ENCODE measurements at regions of chr20 and their contacts with region 1.

Region 1: DNA sequence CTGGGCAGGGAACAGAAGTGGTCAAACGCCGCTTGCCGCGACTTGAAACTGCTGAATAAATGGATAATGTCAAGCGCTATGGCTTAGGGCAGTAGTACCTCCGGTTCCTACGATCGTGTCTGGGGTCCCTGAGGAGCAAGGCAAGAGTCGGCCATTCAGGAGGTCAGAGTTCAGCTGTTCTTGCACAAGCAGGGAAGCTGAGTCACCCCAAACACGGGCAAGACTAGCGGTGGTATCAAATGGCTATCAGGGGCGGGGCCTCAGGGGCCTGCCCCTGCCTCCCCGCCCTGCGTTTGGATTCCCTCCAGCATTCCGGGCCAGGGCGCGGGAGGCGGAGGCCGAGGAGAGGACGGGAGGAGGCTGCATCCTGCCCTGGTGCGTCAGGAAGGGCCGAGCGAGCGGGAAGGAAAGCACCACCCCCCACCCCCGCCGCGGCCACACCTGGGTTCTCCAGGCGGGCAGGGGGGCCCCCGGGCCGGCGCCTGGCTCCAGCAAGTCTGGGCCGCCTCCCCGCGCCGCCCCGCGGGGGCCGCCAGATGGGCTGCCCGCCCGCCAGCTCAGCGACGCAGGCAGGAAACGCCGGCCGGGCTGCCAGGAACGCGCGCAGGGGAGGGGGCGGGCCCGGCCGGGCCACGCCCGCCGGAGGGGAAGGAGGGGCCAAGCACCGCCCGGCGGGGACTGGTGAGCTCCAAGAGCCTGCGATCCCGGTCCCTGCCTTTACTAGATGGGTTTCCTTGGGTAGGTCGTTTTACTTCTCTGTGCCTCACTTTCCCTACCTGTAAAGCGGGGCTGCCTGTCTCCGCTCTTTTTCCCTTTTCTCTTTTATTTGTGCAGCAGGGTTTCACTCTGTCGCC is 32.2 kb upstream of the ID1 start:
- DNase-seq: peak; percentile 96 to 98
- ATAC-seq: peak; percentile 92
- H3K4me3 ChIP-seq: peak overlapping the region; percentile 54 to 68 (median 56)
- H3K27ac ChIP-seq: peak overlapping the region; percentile 86 to 93 (median 89)
- H3K4me1 ChIP-seq: peaks cover 13 to 19% of the 10 kb centered on the region in 2 donors
- H3K27me3 ChIP-seq: no peaks in the 10 kb centered on the region
- CTCF ChIP-seq: peak in 3 of 5 experiments; percentile 7 to 25 (median 23)
- POLR2A ChIP-seq: peak; percentile 86 to 89

Region 2: DNA sequence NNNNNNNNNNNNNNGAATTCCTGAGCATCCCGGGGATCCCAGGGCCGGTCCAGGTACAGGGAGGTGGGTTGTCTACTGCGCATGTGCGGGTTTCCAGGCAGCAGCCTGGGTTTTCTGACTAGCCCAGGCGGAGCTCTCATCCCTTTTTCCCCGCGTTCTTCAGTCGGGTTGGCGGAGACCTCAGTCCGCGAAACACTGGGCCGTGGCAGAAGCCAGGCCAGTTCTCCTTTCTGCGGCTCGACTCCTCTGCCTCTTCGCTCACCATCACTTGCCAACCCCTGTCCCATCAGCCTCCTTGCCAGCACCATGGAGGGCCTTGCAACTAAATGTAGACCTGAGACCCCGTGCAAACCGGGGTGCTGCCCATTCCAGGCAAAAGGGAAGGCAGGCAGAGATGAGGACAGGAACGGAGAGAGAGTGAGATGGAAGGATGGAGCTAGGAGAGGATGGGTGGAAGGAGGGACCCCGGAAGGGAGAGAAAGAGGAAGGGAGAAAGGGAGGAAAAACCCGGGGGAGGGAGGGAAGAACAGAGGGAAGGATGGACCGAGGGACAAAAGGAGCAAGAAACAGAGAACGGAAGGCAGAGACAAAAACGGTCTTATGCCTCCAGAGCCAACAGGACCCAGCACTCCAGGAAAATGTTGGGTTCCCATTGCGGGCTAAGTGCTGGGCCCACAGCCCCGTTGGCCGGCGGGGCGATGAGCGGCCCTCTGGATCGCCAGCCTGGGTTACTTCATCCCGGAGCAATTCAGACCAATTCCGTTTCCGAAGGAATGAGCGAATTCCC is 760.9 kb before region 1 on chr20:
- in situ Hi-C with region 1: no loop called
- intact Hi-C with region 1: no loop called
- DNase-seq: peak in 1 of 2 donors; percentile 28
- ATAC-seq: no peak
- H3K4me3 ChIP-seq: no peak overlapping the region
- H3K27ac ChIP-seq: no peak overlapping the region
- H3K4me1 ChIP-seq: no peaks in the 10 kb centered on the region
- H3K27me3 ChIP-seq: peaks cover 0 to 11% (median 0%) of the 10 kb centered on the region in 3 donors
- CTCF ChIP-seq: no peak
- POLR2A ChIP-seq: no peak

Region 3: DNA sequence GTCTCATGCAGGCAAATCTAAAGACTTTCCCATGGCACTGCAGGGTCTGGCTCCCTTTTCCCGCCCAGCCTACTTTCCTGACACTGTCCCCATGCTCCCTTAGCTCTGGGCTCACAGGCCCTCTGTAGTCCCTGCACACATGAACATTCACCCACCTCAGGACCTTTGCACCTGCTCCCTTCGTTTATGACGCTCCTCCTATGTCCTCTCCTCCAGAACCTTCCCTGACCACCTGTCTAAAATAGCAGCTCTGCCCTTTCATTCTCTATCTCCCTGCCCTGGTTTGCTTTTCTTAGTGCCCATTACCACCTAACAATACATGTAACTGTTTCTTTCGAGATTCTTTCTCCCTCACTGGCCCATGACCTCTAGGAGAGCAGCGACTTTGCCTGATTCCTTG is 36.4 kb before region 1 on chr20:
- in situ Hi-C with region 1: no loop called
- intact Hi-C with region 1: no loop called
- DNase-seq: no peak
- ATAC-seq: no peak
- H3K4me3 ChIP-seq: no peak overlapping the region
- H3K27ac ChIP-seq: no peak overlapping the region
- H3K4me1 ChIP-seq: no peaks in the 10 kb centered on the region
- H3K27me3 ChIP-seq: no peaks in the 10 kb centered on the region
- CTCF ChIP-seq: no peak
- POLR2A ChIP-seq: no peak

Region 4: DNA sequence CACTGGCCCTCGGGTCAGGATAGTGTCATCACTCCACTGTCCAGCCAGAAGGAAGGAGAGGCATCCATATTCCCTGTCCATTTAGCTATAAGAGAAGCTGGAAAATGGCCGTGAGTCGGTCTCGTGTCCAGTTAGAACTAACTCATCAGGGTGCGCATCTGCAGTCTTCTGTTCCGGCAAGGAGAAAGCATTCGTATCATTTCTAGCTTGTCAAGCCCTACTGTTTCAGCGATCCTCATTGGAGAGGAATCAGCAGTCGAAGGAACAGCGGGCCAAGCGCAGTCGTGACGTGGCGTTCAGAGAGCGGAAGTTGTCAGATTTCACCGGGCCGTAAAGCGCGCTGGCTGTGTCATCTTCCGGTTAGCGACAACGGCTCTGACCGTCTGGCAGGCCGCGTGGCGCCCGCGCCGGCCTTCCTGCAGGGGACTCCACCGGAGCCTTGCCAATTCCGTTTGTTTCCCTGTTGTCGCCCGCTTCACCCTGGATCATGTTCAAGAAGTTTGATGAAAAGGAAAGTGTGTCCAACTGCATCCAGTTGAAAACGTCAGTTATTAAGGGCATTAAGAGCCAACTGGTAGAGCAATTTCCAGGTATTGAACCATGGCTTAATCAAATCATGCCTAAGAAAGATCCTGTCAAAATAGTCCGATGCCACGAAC is 25.8 kb before region 1 on chr20:
- in situ Hi-C with region 1: no loop called
- intact Hi-C with region 1: no loop called
- DNase-seq: peak; percentile 73 to 85
- ATAC-seq: peak; percentile 83 to 85
- H3K4me3 ChIP-seq: peak overlapping the region; percentile 47 to 69 (median 62)
- H3K27ac ChIP-seq: peak overlapping the region; percentile 83 to 92 (median 86)
- H3K4me1 ChIP-seq: peaks cover 6 to 12% of the 10 kb centered on the region in 2 donors
- H3K27me3 ChIP-seq: no peaks in the 10 kb centered on the region
- CTCF ChIP-seq: peak in 1 of 5 experiments; percentile 30
- POLR2A ChIP-seq: peak; percentile 57 to 70

Region 5: GRCh38 chr20:31661625-31662371 is 88.9 kb after region 1 on chr20:
- in situ Hi-C with region 1: no loop called
- intact Hi-C with region 1: loop called (anchors 5 kb)
- DNase-seq: peak; percentile 60 to 74
- ATAC-seq: peak; percentile 83 to 86
- H3K4me3 ChIP-seq: peak overlapping the region; percentile 30 to 62 (median 46)
- H3K27ac ChIP-seq: peak overlapping the region; percentile 63 to 98 (median 80)
- H3K4me1 ChIP-seq: peaks cover 35 to 38% of the 10 kb centered on the region in 2 donors
- H3K27me3 ChIP-seq: no peaks in the 10 kb centered on the region
- CTCF ChIP-seq: peak; percentile 53 to 94 (median 90)
- POLR2A ChIP-seq: peak; percentile 41 to 71